Pancreas (tissue), 10 donors: ENCODE measurements at regions of chr19 and their contacts with region 1.

Region 1: GRCh38 chr19:1113033-1113985 is 9.5 kb downstream of the GPX4 start:
- DNase-seq: peak; percentile 95 to 98 (median 96)
- ATAC-seq: peak; percentile 85 to 94 (median 92)
- H3K4me3 ChIP-seq: no peak overlapping the region
- H3K27ac ChIP-seq: peak overlapping the region in 3 of 4 donors; percentile 18 to 69 (median 41)
- H3K4me1 ChIP-seq: peaks cover 0 to 7% (median 6%) of the 10 kb centered on the region in 3 donors
- H3K27me3 ChIP-seq: no peaks in the 10 kb centered on the region
- CTCF ChIP-seq: peak; percentile 66 to 90 (median 84)

Region 2: DNA sequence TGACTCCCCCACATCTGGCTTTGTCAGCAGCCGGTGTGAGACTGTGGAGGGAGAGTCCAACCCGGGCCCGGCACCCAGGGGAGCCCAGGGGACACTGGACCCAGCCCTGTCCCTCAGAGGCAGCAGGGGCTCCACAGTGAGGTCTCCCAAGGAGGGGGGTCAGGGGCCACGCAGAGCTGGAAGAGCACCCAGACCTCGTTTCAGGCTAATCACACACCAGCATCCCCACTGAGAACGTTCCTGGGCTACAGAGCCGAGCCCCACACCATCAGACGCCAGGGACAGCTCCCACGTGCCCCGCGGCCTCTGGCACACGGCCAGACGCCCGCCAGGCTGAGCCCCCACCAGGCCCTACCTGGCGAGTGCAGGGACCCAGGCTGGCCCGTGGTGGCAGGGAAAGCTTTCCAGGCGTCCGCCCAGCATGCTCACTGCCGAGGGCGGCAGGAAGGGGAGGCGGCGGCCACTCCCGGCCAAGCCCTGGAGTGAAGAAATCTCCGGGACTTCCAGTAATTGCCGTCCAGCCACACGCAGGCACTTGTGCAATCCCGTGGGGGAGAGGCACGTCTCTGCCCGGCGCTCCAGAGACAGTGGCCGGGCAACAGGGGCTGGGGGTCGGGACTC is 41.5 kb after region 1 on chr19:
- intact Hi-C with region 1: no loop called
- DNase-seq: peak in 5 of 6 donors; percentile 54 to 82 (median 65)
- ATAC-seq: peak; percentile 57 to 81 (median 76)
- H3K4me3 ChIP-seq: peak overlapping the region in 1 of 4 donors; percentile 30
- H3K27ac ChIP-seq: peak overlapping the region in 3 of 4 donors; percentile 31 to 82 (median 65)
- H3K4me1 ChIP-seq: peaks cover 0 to 8% (median 0%) of the 10 kb centered on the region in 3 donors
- H3K27me3 ChIP-seq: no peaks in the 10 kb centered on the region
- CTCF ChIP-seq: no peak

Region 3: GRCh38 chr19:1189419-1189818 is 76.1 kb after region 1 on chr19:
- intact Hi-C with region 1: loop called in 2 of 3 experiments (anchors 5 kb)
- DNase-seq: no peak
- ATAC-seq: no peak
- H3K4me3 ChIP-seq: no peak overlapping the region
- H3K27ac ChIP-seq: no peak overlapping the region
- H3K4me1 ChIP-seq: no peaks in the 10 kb centered on the region
- H3K27me3 ChIP-seq: no peaks in the 10 kb centered on the region
- CTCF ChIP-seq: no peak